Breast epithelium (tissue), 4 donors: ENCODE measurements at regions of chr16 and their contacts with region 1.

Region 1: DNA sequence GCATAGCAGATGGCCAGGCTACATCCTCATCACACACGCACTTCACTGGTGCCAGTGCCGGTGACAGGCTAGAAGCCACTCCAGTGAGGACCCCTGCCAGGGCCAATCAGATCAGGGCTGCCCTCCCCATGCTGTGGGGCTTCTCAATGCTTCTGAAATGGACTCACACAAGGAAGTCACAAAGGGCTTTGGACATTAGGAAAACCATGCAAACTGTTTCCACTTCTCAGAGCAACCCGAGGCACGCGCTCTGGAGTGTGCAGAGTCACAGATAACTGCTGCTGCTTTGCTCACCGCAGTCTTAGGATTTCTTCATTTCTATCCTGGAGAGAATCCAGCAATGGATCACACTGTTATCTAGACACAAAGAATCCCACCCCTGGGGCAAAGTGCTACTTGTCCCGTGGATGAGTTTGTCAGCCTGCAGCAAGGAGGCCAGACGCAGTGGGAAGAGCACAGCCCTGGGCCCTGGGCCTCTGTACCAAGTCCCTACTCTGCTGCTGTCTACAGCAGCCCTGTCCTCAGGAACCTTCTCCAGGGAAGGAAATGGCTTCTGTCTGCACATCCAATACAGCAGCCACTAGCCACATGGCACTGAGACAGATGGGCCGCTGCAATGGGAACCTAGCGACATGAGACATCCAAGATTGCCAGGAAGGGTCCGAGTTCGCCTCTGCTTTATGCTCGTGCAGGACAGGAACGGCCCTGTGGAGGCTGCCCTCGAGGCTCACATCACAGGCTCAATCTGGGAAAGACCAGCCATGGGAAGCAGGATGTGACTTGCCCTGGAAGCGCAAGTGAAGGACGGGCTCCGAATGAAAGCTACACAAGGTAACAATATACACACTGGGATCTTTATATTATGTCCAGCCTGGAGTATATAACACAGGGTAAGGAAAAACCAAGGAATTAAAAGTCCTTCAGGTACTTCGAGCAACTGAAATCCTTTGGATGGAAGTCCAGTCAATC is 169.3 kb downstream of the ZFHX3 start:
- DNase-seq: no peak
- H3K4me3 ChIP-seq: no peak overlapping the region
- H3K27ac ChIP-seq: peak overlapping the region in 1 of 2 donors; percentile 44
- H3K4me1 ChIP-seq: peaks cover 0 to 2% of the 10 kb centered on the region in 2 donors
- H3K27me3 ChIP-seq: no peaks in the 10 kb centered on the region
- CTCF ChIP-seq: no peak
- POLR2A ChIP-seq: no peak

Region 2: GRCh38 chr16:72836979-72837378 is 41.6 kb before region 1 on chr16:
- intact Hi-C with region 1: no loop called
- DNase-seq: no peak
- H3K4me3 ChIP-seq: no peak overlapping the region
- H3K27ac ChIP-seq: no peak overlapping the region
- H3K4me1 ChIP-seq: peaks cover 0 to 3% of the 10 kb centered on the region in 2 donors
- H3K27me3 ChIP-seq: no peaks in the 10 kb centered on the region
- CTCF ChIP-seq: no peak
- POLR2A ChIP-seq: no peak

Region 3: GRCh38 chr16:72847187-72848027 is 31.2 kb before region 1 on chr16:
- intact Hi-C with region 1: loop called (anchors 1 kb)
- DNase-seq: no peak
- H3K4me3 ChIP-seq: no peak overlapping the region
- H3K27ac ChIP-seq: peak overlapping the region in 1 of 2 donors; percentile 81
- H3K4me1 ChIP-seq: no peaks in the 10 kb centered on the region
- H3K27me3 ChIP-seq: no peaks in the 10 kb centered on the region
- CTCF ChIP-seq: no peak
- POLR2A ChIP-seq: no peak